ENCODE measurements at regions of chr18 and their contacts with region 1.

Region 1: DNA sequence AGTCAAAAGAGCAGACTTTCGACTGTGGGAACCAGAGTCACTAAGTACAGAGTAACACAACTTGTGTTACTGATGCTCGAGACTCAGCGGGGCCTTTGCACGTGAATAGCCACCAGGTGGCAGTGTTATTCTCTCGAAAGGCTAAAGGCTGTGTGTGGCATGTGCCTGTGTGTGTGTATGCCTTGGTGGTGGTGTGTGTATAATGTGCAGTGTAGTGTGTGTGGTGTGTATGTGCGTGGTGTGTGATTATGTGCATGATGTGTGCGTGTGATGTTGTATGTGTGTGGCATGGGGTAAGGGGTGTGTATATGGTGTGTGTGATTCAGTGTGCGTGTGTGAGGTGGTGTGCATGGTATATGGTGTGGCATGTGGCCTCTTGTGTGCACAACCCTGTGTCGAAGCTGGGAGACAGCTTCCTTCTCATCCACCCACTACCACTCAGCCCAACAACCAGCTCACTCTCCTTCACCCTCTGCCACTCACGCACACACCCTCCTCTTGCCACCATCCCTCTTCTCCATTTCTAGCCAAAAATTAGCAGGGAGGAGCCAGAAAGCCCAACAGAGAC is 83.0 kb upstream of the ZNF532 start:
- DNase-seq: peak; percentile 83

Region 2: DNA sequence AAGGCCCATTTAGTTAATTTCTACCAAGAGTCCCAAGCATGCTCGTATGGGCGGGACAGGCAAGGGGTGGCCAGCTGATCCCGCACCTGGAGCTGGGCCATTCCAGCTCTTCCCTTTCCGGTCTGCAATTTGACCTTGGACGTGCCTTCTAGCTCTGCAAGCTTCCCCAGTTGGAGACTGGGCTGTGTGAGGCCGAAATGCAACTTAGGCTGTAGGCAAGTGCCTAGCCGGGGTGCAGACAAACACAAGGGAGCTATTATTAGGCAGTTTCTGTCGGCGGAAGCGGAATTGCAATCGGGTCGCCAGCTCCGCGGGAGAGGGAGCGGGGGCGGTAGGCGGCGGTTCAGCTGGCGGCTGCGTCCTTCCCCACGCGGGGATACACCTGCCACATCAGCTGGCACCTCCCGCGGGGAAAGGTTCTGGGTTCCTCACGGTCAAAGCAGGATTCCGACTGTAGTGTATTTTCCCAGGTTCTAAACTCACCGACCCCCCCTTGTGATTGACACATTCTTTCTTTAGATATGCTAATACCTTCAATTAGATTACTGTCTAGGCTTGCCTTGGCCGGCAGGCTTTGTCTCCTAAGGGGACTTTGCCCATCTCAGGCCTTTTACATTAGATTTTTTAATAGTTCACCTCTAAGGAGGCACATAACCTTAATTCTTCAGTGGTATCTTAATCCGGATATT is 65.8 kb after region 1 on chr18:
- intact Hi-C with region 1: loop called (anchors 5 kb)
- DNase-seq: no peak

Region 3: GRCh38 chr18:58864146-58865032 is 82.7 kb after region 1 on chr18 and contains the start of gene ZNF532:
- intact Hi-C with region 1: loop called (anchors 5 kb)
- DNase-seq: no peak
- total RNA-seq, gene ZNF532: 71.8 TPM

Region 4: GRCh38 chr18:58896268-58896667 is 114.6 kb after region 1 on chr18:
- intact Hi-C with region 1: loop called (anchors 5 kb)
- DNase-seq: no peak

Region 5: DNA sequence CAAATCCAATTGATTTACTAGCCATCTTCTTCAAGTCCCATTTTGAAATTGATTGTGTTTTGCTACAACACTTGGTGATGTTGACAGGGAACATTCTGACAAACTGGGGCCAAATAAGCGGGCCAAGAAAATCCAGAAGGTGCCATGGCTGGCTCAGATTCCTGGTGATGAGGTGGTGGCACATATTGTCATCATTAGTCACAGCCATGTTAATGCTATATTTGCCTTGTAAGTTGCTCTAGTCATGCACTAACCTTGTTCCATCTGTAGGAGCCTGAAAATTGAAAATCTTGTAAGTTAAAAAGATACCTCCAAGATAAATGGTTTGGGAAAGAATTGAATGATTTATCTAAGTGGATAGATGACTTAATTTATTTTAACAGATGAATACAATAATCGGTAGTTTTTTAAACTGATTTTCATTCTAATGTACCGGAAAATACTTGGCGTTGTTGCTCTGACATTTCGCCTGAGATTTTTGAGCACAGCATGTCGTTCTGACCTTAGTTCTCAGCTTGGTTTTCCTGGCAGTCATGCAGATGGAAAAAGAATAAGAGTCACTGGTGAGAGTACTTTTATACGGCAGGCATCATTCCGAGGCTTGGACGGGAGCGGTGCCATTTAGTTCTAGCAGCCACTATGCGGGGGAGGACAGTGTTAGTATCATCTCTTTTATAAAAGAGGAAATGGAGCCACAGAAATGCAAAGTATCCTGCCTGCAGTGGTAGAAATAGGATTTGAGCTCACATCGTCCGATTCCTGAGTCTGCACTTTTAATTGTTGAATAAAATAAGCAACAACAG is 216.9 kb after region 1 on chr18:
- intact Hi-C with region 1: loop called (anchors 5 kb)
- DNase-seq: no peak

Region 6: GRCh38 chr18:59056706-59057492 is 275.2 kb after region 1 on chr18:
- intact Hi-C with region 1: loop called (anchors 1 kb)
- DNase-seq: peak; percentile 82

Region 7: GRCh38 chr18:59070181-59070912 is 288.6 kb after region 1 on chr18:
- intact Hi-C with region 1: loop called (anchors 1 kb)
- DNase-seq: peak; percentile 82

Measured in cardiac septum (tissue), 1 donor.